Mucosa of descending colon (tissue), 3 donors: ENCODE measurements at regions of chr5 and their contacts with region 1.

Region 1: DNA sequence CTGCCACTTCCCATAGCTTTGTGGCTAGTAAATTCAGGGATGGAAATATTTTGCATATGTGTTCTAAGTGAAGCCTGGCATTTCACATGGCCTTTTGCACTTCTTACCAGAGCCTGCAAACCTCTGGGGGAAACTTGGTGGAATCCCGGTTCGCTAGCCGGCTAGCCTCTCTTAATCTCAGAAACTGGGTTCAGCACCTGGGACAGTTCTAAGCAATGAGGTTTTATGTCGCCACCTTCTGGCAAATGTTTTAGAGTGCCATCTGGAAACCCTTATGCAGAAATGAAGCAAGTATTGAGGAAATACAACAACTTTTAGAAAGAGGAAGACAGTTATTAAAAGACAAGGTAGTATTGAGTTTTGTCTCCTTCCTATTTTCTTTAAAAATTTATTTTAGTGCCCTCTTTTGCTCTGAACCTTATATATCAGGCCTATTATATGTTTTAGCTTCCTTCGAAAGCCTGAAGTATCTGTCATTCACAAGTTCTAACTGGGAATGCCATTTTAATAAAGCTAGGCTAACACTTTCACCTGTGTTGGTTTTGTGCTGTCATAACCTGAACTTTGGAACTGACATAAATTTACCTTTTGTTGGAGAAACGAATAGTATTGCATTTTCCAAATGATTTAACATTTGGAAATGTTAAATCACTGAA is 963 bp upstream of the HTR1A start:
- DNase-seq: peak in 1 of 3 donors; percentile 81
- ATAC-seq: peak; percentile 63
- H3K4me3 ChIP-seq: no peak overlapping the region
- H3K4me1 ChIP-seq: no peaks in the 10 kb centered on the region
- CTCF ChIP-seq: no peak

Region 2: GRCh38 chr5:63401436-63402046 is 561.7 kb before region 1 on chr5:
- intact Hi-C with region 1: loop called in 1 of 2 experiments (anchors 5 kb)
- DNase-seq: peak in 2 of 3 donors; percentile 58 to 72
- ATAC-seq: peak; percentile 56
- H3K4me3 ChIP-seq: no peak overlapping the region
- H3K4me1 ChIP-seq: no peaks in the 10 kb centered on the region
- CTCF ChIP-seq: no peak

Region 3: GRCh38 chr5:64315778-64316177 is 352.6 kb after region 1 on chr5:
- intact Hi-C with region 1: no loop called
- DNase-seq: no peak
- ATAC-seq: no peak
- H3K4me3 ChIP-seq: no peak overlapping the region
- H3K4me1 ChIP-seq: no peaks in the 10 kb centered on the region
- CTCF ChIP-seq: no peak

Region 4: GRCh38 chr5:64384761-64385160 is 421.6 kb after region 1 on chr5:
- intact Hi-C with region 1: no loop called
- DNase-seq: no peak
- ATAC-seq: no peak
- H3K4me3 ChIP-seq: no peak overlapping the region
- H3K4me1 ChIP-seq: no peaks in the 10 kb centered on the region
- CTCF ChIP-seq: no peak